WTC11 (cell line): ENCODE measurements at regions of chr7 and their contacts with region 1.

Region 1: GRCh38 chr7:77651573-77652162 is 44.6 kb upstream of the RSBN1L start:
- DNase-seq: no peak
- ATAC-seq: no peak
- H3K4me3 Mint-ChIP-seq: no peak overlapping the region
- H3K27ac Mint-ChIP-seq: no peak overlapping the region
- H3K4me1 Mint-ChIP-seq: 0 out of 2 replicates have a peak, but pooled peaks cover 3% of the 10 kb centered on the region
- H3K27me3 Mint-ChIP-seq: no peaks in the 10 kb centered on the region
- CTCF ChIP-seq: peak; percentile 67

Region 2: DNA sequence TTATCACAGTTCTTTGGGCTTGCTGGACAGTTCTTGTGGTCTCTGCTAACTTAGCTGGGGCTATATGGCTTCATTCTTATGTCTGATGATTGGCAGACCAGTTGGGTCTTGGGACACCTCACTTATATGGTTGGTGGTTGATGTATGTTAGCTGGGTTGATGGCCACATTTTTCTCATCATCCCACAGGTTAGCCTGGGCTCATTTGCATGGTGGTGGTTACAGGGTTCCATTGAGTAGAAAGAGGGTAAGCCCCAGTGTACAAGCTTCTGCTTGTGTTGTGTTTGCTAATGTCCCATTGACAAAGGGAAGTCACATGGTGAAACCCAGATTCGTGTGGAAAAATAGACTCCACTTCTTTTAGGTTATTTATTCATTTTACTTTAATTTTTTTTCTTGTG is 105.9 kb after region 1 on chr7:
- CTCF ChIA-PET with region 1: interaction called, 13 read pairs
- POLR2A ChIA-PET with region 1: no interaction called
- DNase-seq: no peak
- ATAC-seq: no peak
- H3K4me3 Mint-ChIP-seq: no peak overlapping the region
- H3K27ac Mint-ChIP-seq: no peak overlapping the region
- H3K4me1 Mint-ChIP-seq: no peaks in the 10 kb centered on the region
- H3K27me3 Mint-ChIP-seq: no peaks in the 10 kb centered on the region
- CTCF ChIP-seq: no peak